CD4-positive, alpha-beta memory T cell (primary cell): ENCODE measurements at regions of chr11 and their contacts with region 1.

Region 1: DNA sequence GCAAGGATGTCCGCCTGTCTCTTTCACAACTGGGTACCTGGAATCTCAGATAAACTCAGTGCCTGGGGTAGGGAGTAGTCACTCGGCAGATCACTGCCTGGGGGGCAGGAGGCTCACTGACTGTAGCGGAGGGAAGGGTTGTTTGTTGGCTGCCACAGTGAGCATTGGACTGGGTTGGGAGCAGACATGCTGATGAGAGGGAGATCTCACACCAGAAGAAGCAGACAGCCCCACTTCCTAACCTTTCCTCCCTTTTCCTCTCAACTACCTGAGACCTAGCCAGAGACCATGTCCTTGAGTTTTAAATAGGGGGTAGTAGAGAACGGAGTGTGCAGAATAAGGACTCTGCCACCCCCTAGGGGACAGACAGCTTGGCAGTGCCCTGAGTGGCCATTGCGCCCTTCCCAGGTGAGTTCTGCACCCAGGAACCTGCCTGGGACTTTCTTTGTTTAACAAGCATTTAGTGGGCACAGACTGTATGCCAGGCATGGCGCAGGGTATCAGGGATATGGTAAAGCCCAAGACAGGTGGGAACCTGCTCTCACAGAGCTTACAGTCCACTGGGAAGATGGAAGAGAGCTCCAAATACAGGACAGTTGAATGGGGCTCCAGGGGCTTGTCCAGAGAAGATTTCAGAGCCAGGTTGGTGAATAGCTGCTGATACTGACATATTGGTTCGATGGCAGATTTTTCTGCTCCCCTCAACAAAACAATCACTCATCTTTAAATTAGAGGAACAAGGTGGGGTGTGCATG is 115.7 kb upstream of the NNMT start:
- DNase-seq: no peak
- H3K4me3 ChIP-seq: no peak overlapping the region
- H3K4me3 Mint-ChIP-seq: peak overlapping the region in 6 of 8 donors; percentile 17 to 60 (median 42)
- H3K27ac ChIP-seq: no peak overlapping the region
- H3K27ac Mint-ChIP-seq: peak overlapping the region in 3 of 7 donors; percentile 53 to 90 (median 79)
- H3K4me1 ChIP-seq: peaks cover 70% of the 10 kb centered on the region
- H3K4me1 Mint-ChIP-seq: peaks cover 60 to 92% (median 77%) of the 10 kb centered on the region in 4 donors
- H3K27me3 ChIP-seq: no peaks in the 10 kb centered on the region
- H3K27me3 Mint-ChIP-seq: no peaks in the 10 kb centered on the region

Region 2: DNA sequence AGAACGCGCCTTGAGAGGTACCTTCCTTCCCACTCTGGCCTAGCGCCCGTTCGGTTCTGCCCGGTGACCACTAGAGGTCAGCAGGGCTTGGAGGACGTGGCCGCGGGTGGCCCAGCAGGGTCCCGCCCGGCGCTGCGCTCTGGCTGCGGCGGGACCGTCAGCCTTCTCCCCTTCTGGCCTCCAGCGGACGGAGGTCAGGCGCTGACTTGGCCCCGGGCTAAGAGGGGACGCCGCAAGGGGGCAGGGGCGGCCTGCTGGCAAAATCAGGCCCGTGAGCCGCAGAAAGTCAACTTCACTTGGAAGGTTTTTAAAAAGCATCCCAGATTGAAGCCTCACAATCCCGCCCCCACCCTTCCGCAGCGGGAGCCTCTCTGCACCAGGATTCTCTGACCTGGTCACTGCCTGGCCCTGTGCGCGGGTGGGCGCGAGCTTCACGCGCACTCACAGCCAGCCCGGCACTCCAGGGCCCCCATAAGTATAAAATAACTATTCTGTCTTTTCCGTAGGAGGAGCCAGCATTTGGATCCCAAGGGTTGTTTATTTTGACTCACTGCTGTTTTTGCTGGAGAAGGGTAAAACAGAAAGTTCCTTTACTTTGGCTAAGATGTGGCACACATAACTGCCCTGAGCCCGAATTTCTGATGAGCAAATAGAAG is 144.2 kb before region 1 on chr11:
- CTCF ChIA-PET with region 1: interaction called, 39 read pairs
- POLR2A ChIA-PET with region 1: no interaction called
- intact Hi-C with region 1: loop called (anchors 1 kb)
- DNase-seq: peak in 4 of 5 donors; percentile 51 to 54 (median 52)
- H3K4me3 ChIP-seq: no peak overlapping the region
- H3K4me3 Mint-ChIP-seq: peak overlapping the region in 5 of 8 donors; percentile 7 to 54 (median 28)
- H3K27ac ChIP-seq: no peak overlapping the region
- H3K27ac Mint-ChIP-seq: no peak overlapping the region
- H3K4me1 ChIP-seq: peaks cover 6% of the 10 kb centered on the region
- H3K4me1 Mint-ChIP-seq: peaks cover 0 to 9% (median 6%) of the 10 kb centered on the region in 4 donors
- H3K27me3 ChIP-seq: no peaks in the 10 kb centered on the region
- H3K27me3 Mint-ChIP-seq: no peaks in the 10 kb centered on the region

Region 3: GRCh38 chr11:114075891-114076441 is 104.5 kb before region 1 on chr11:
- CTCF ChIA-PET with region 1: no interaction called
- POLR2A ChIA-PET with region 1: interaction called, 5 read pairs
- intact Hi-C with region 1: loop called (anchors 5 kb)
- DNase-seq: peak in 4 of 5 donors; percentile 48 to 64 (median 52)
- H3K4me3 ChIP-seq: no peak overlapping the region
- H3K4me3 Mint-ChIP-seq: peak overlapping the region in 7 of 8 donors; percentile 32 to 89 (median 71)
- H3K27ac ChIP-seq: no peak overlapping the region
- H3K27ac Mint-ChIP-seq: peak overlapping the region; percentile 4 to 93 (median 54)
- H3K4me1 ChIP-seq: peaks cover 72% of the 10 kb centered on the region
- H3K4me1 Mint-ChIP-seq: peaks cover 57 to 88% (median 72%) of the 10 kb centered on the region in 4 donors
- H3K27me3 ChIP-seq: no peaks in the 10 kb centered on the region
- H3K27me3 Mint-ChIP-seq: no peaks in the 10 kb centered on the region

Region 4: GRCh38 chr11:114124601-114125144 is 55.8 kb before region 1 on chr11:
- CTCF ChIA-PET with region 1: no interaction called
- POLR2A ChIA-PET with region 1: no interaction called
- intact Hi-C with region 1: no loop called
- DNase-seq: no peak
- H3K4me3 ChIP-seq: no peak overlapping the region
- H3K4me3 Mint-ChIP-seq: no peak overlapping the region
- H3K27ac ChIP-seq: no peak overlapping the region
- H3K27ac Mint-ChIP-seq: no peak overlapping the region
- H3K4me1 ChIP-seq: no peaks in the 10 kb centered on the region
- H3K4me1 Mint-ChIP-seq: peaks cover 4 to 14% (median 5%) of the 10 kb centered on the region in 4 donors
- H3K27me3 ChIP-seq: no peaks in the 10 kb centered on the region
- H3K27me3 Mint-ChIP-seq: no peaks in the 10 kb centered on the region

Region 5: DNA sequence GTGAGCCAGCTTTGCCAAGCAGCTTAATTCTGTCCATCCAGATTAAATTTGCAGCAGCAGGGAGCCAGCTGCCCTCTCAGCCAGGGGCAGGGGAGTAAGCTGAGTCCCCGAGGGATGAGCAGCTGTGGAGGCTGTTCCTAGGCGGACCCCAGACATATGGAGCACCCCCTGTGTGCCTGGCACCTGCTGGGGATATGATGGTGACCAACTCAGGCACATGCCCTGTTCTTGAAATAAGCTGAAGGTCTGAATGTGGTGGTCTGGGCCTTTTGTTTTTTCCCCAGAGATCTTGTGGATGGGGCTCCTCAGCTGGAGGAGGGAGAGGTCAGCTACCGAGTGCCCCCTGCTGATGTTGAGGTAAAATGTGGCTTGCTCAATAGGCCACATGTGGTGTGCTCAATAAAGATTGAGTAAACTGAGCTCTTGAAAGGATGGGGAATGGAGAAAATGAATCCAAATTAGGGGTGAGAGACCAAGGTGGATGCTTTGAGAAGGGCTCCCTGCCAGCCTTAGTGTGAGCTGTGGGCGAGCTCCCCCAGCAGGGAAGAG is 12.4 kb after region 1 on chr11:
- CTCF ChIA-PET with region 1: interaction called, 106 read pairs
- POLR2A ChIA-PET with region 1: interaction called, 222 read pairs
- intact Hi-C with region 1: no loop called
- DNase-seq: no peak
- H3K4me3 ChIP-seq: no peak overlapping the region
- H3K4me3 Mint-ChIP-seq: no peak overlapping the region
- H3K27ac ChIP-seq: no peak overlapping the region
- H3K27ac Mint-ChIP-seq: peak overlapping the region in 3 of 7 donors; percentile 34 to 94 (median 36)
- H3K4me1 ChIP-seq: peaks cover 8% of the 10 kb centered on the region
- H3K4me1 Mint-ChIP-seq: peaks cover 17 to 33% (median 21%) of the 10 kb centered on the region in 4 donors
- H3K27me3 ChIP-seq: no peaks in the 10 kb centered on the region
- H3K27me3 Mint-ChIP-seq: no peaks in the 10 kb centered on the region

Region 6: DNA sequence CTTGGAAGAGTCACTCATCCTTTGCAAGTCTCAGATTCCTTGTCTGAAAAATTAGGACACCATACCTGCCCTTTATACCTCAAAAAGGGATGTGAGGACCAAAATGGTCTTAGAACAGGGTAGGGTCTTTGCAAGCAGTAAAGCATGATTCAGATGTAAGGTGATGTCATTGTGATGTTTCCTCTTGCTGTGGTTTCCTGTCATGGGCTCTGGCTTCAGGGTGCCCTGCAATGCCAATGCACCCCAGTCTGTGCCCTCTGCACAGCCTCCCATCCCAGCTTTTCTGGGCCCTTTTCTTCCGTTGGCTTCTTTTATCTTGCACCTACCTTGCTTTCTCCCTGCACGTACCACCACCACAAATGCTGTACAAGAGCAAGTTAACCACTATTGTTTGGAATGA is 27.9 kb after region 1 on chr11:
- CTCF ChIA-PET with region 1: interaction called, 4 read pairs
- POLR2A ChIA-PET with region 1: interaction called, 20 read pairs
- intact Hi-C with region 1: no loop called
- DNase-seq: peak; percentile 31 to 60 (median 40)
- H3K4me3 ChIP-seq: peak overlapping the region in 1 of 2 donors; percentile 10
- H3K4me3 Mint-ChIP-seq: peak overlapping the region in 6 of 8 donors; percentile 0 to 62 (median 34)
- H3K27ac ChIP-seq: no peak overlapping the region
- H3K27ac Mint-ChIP-seq: peak overlapping the region; percentile 0 to 77 (median 44)
- H3K4me1 ChIP-seq: peaks cover 30% of the 10 kb centered on the region
- H3K4me1 Mint-ChIP-seq: peaks cover 23 to 51% (median 32%) of the 10 kb centered on the region in 4 donors
- H3K27me3 ChIP-seq: no peaks in the 10 kb centered on the region
- H3K27me3 Mint-ChIP-seq: no peaks in the 10 kb centered on the region

Region 7: DNA sequence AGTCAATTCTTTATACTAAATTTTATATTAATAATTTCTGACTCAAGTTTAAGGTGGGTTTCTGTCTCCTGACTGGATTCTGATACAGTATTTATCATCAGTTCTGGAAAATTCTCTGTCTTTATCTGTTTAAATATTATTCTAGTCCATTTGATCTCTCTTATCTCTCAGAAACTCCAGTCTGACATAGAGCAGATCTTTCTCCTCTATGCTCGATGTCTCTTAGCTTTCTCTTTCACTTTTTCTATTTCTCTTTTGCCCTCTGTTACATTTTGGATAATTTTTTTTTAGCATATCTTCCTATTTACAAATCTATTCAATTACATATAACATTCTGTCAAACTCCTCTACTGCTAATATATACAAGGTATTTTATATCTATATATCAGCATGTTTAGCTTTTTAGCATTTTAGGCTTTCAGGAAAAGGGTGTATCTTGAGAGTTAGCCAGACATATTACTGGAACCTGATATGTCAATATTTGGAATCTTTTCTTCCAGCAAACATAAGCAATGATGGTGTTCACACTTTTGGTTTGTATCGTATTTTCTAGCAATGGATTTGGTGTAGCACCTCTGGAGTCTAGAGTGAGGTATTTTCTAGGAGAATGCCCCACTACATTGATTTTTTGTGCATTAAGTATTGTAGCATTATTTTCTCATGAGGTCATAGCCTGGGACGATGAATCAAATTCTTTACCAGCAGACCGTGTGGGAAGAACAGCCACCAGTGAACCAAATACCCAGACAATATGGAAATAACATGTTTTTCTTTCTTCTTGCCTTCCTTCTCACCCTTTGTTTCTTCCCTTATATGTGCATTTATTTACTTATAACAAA is 111.6 kb after region 1 on chr11:
- CTCF ChIA-PET with region 1: no interaction called
- POLR2A ChIA-PET with region 1: no interaction called
- intact Hi-C with region 1: no loop called
- DNase-seq: no peak
- H3K4me3 ChIP-seq: no peak overlapping the region
- H3K4me3 Mint-ChIP-seq: peak overlapping the region in 1 of 8 donors; percentile 10
- H3K27ac ChIP-seq: no peak overlapping the region
- H3K27ac Mint-ChIP-seq: no peak overlapping the region
- H3K4me1 ChIP-seq: no peaks in the 10 kb centered on the region
- H3K4me1 Mint-ChIP-seq: no peaks in the 10 kb centered on the region
- H3K27me3 ChIP-seq: no peaks in the 10 kb centered on the region
- H3K27me3 Mint-ChIP-seq: peaks cover 4 to 11% of the 10 kb centered on the region in 2 donors